A673 (cell line): ENCODE measurements at regions of chr6 and their contacts with region 1.

Region 1: GRCh38 chr6:81752138-81752920 is at the start of gene TENT5A:
- DNase-seq: peak; percentile 94
- H3K4me3 ChIP-seq: peak within 1 kb of the TSS; percentile 68
- H3K27ac ChIP-seq: peak within 1 kb of the TSS; percentile 82
- H3K4me1 ChIP-seq: peaks cover 23% of the 10 kb centered on the region
- H3K27me3 ChIP-seq: no peaks in the 10 kb centered on the region
- CTCF ChIP-seq: peak; percentile 46
- total RNA-seq, gene TENT5A: 36.9 and 37.1 TPM in 2 replicates

Region 2: DNA sequence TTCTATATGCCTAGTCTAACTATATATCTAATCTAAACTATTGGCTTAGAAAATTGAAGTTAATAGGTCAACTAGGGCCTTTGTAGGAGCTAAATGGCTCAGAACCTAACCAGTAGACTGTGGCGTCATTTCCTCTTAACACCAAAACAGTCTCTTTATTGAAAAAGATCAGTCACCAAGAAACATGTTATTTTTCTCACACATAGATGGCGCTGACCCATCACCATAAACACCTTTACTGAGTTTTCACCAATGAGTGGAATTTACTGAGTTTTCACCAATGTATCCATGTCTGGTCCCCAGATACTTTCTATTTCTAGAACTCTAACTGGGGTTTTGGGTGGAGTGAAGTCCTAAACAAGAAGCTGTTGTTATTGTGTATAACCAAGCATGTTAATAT is 1009.8 kb before region 1 on chr6:
- CTCF ChIA-PET with region 1: interaction called, 3 read pairs
- POLR2A ChIA-PET with region 1: no interaction called
- intact Hi-C with region 1: loop called (anchors 2 kb)
- DNase-seq: peak; percentile 85
- H3K4me3 ChIP-seq: no peak overlapping the region
- H3K27ac ChIP-seq: no peak overlapping the region
- H3K4me1 ChIP-seq: peaks cover 4% of the 10 kb centered on the region
- H3K27me3 ChIP-seq: no peaks in the 10 kb centered on the region
- CTCF ChIP-seq: peak; percentile 72

Region 3: DNA sequence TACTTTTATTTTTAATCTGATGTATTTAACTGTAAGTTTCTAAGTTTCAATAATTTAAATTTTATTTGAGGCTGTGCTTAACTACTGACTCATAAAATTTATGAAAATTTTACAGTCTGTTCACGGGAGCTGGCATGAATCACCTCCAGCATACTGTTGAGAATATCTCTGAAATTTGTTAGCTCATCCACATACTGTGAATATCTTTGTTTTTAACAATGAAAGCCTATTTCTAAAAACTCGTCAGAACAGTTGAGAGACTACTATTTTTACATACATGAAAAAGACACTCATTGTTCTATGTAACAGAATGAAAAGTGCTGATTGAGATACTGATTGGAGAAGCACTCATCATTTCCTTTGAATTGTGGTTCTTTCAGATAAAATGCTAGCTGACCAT is 749.2 kb before region 1 on chr6:
- CTCF ChIA-PET with region 1: interaction called, 13 read pairs
- POLR2A ChIA-PET with region 1: no interaction called
- intact Hi-C with region 1: no loop called
- DNase-seq: no peak
- H3K4me3 ChIP-seq: no peak overlapping the region
- H3K27ac ChIP-seq: no peak overlapping the region
- H3K4me1 ChIP-seq: no peaks in the 10 kb centered on the region
- H3K27me3 ChIP-seq: no peaks in the 10 kb centered on the region
- CTCF ChIP-seq: no peak

Region 4: DNA sequence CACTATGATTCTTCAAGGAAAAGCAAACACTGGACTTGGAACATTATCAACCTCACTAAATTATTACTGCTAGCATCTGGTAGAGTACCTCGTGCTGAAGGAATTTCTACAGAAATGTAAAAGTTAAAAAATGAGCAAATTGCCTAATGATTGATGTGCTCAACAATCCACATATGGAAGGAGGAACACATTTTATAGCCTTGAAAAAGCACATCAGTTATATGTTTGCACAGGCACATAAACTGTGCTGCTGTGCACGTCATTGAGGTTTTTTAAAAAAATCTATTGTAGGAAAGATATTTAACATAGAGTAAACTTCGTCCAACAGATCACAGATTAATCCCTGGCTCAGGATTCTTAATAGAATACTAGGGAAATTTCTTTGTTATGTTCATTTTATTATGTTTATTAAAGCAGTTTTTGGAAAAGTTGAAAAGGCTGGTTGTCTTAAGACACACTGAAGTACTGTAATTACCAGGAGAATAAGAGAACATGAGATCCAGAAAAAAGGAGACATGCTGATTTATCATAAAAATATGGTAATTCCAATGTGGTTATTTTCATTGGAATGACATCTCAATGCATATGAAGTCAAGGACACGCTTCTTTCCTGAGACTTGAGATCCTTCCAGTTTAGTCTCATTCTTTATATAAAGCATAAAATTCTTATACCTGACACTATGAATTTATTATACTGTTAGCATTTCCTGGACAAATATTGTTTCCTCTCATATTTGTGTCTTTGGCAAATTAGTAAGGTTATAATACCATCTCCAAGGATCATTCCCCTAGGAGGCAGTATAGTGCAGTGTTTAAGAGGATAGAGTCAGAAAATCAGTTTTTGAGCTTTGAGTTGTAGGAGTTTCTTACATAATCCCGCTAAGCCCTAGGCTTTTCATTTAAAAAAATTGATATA is 510.9 kb before region 1 on chr6:
- CTCF ChIA-PET with region 1: interaction called, 3 read pairs
- POLR2A ChIA-PET with region 1: no interaction called
- intact Hi-C with region 1: loop called (anchors 5 kb)
- DNase-seq: peak; percentile 73
- H3K4me3 ChIP-seq: no peak overlapping the region
- H3K27ac ChIP-seq: no peak overlapping the region
- H3K4me1 ChIP-seq: no peaks in the 10 kb centered on the region
- H3K27me3 ChIP-seq: no peaks in the 10 kb centered on the region
- CTCF ChIP-seq: peak; percentile 67

Region 5: DNA sequence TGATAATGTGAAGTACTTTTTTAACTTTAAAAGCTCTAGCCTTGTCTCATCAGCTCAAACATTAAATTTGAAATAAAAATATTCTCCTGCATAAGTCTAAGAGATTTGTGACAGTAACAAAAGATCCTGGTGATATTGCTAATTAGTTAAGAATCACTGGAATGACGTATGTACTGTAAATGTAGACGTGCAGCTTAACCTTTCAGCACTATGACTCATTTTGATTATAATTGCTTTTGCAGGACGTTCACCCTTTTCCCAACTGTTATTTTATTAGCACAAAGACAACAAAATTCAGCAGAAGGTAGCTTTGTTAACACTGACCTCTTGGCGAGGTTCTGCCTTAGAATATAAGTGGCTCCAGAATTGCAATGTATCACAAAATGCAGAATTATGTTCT is 68.4 kb before region 1 on chr6:
- CTCF ChIA-PET with region 1: no interaction called
- POLR2A ChIA-PET with region 1: no interaction called
- intact Hi-C with region 1: loop called (anchors 2 kb)
- DNase-seq: peak; percentile 51
- H3K4me3 ChIP-seq: no peak overlapping the region
- H3K27ac ChIP-seq: peak overlapping the region; percentile 96
- H3K4me1 ChIP-seq: peaks cover 50% of the 10 kb centered on the region
- H3K27me3 ChIP-seq: no peaks in the 10 kb centered on the region
- CTCF ChIP-seq: no peak

Region 6: GRCh38 chr6:82178077-82178758 is 425.9 kb after region 1 on chr6:
- CTCF ChIA-PET with region 1: no interaction called
- POLR2A ChIA-PET with region 1: interaction called, 7 read pairs
- intact Hi-C with region 1: loop called (anchors 2 kb)
- DNase-seq: peak; percentile 74
- H3K4me3 ChIP-seq: no peak overlapping the region
- H3K27ac ChIP-seq: no peak overlapping the region
- H3K4me1 ChIP-seq: peaks cover 48% of the 10 kb centered on the region
- H3K27me3 ChIP-seq: no peaks in the 10 kb centered on the region
- CTCF ChIP-seq: peak; percentile 78